ENCODE measurements at regions of chr5 and their contacts with region 1.

Region 1: GRCh38 chr5:103582364-103582763 is 19.8 kb upstream of the NUDT12 start:
- DNase-seq: no peak
- ATAC-seq: no peak
- H3K4me3 ChIP-seq: no peak overlapping the region
- H3K27ac ChIP-seq: no peak overlapping the region
- H3K4me1 ChIP-seq: no peaks in the 10 kb centered on the region
- H3K27me3 ChIP-seq: no peaks in the 10 kb centered on the region

Region 2: GRCh38 chr5:103475629-103476240 is 106.6 kb before region 1 on chr5:
- intact Hi-C with region 1: no loop called
- DNase-seq: no peak
- ATAC-seq: peak; percentile 41 to 51
- H3K4me3 ChIP-seq: no peak overlapping the region
- H3K27ac ChIP-seq: no peak overlapping the region
- H3K4me1 ChIP-seq: no peaks in the 10 kb centered on the region
- H3K27me3 ChIP-seq: no peaks in the 10 kb centered on the region

Region 3: GRCh38 chr5:103758996-103759395 is 176.6 kb after region 1 on chr5:
- intact Hi-C with region 1: no loop called
- DNase-seq: no peak
- ATAC-seq: no peak
- H3K4me3 ChIP-seq: no peak overlapping the region
- H3K27ac ChIP-seq: no peak overlapping the region
- H3K4me1 ChIP-seq: no peaks in the 10 kb centered on the region
- H3K27me3 ChIP-seq: no peaks in the 10 kb centered on the region

Region 4: DNA sequence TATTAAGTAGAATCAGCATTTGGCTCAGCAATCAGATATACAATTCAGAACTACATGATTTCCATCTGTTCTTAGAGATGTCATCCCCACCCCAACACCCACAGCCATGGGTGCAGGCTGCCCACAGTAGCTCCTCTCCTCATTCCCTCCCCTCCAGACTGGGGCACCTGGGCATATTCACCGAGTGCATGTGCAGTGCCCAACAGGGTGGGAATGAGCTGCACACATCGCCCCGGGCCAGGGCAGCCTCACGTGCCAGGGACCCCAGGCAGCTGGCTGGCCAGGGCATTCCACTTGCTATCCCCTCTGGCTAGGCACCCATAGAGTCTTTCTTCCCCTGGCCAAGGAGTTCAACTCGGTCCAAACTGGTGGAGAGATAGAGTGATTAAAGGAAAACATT is 442.2 kb after region 1 on chr5:
- intact Hi-C with region 1: no loop called
- DNase-seq: no peak
- ATAC-seq: no peak
- H3K4me3 ChIP-seq: no peak overlapping the region
- H3K27ac ChIP-seq: no peak overlapping the region
- H3K4me1 ChIP-seq: no peaks in the 10 kb centered on the region
- H3K27me3 ChIP-seq: no peaks in the 10 kb centered on the region

Region 5: GRCh38 chr5:104178829-104179456 is 596.6 kb after region 1 on chr5:
- intact Hi-C with region 1: loop called in 2 of 4 experiments (anchors 5 to 10 kb)
- DNase-seq: peak in 2 of 3 donors; percentile 15 to 57
- ATAC-seq: peak; percentile 63 to 71
- H3K4me3 ChIP-seq: no peak overlapping the region
- H3K27ac ChIP-seq: no peak overlapping the region
- H3K4me1 ChIP-seq: no peaks in the 10 kb centered on the region
- H3K27me3 ChIP-seq: no peaks in the 10 kb centered on the region

Region 6: GRCh38 chr5:104184264-104184663 is 601.9 kb after region 1 on chr5:
- intact Hi-C with region 1: loop called in 2 of 4 experiments (anchors 5 to 10 kb)
- DNase-seq: no peak
- ATAC-seq: no peak
- H3K4me3 ChIP-seq: no peak overlapping the region
- H3K27ac ChIP-seq: no peak overlapping the region
- H3K4me1 ChIP-seq: no peaks in the 10 kb centered on the region
- H3K27me3 ChIP-seq: no peaks in the 10 kb centered on the region

Measured in right cardiac atrium (tissue), 5 donors.